Activated CD8-positive, alpha-beta T cell treated with anti-CD3 and anti-CD28 coated beads for 36 hours (primary cell): ENCODE measurements at regions of chr2 and their contacts with region 1.

Region 1: DNA sequence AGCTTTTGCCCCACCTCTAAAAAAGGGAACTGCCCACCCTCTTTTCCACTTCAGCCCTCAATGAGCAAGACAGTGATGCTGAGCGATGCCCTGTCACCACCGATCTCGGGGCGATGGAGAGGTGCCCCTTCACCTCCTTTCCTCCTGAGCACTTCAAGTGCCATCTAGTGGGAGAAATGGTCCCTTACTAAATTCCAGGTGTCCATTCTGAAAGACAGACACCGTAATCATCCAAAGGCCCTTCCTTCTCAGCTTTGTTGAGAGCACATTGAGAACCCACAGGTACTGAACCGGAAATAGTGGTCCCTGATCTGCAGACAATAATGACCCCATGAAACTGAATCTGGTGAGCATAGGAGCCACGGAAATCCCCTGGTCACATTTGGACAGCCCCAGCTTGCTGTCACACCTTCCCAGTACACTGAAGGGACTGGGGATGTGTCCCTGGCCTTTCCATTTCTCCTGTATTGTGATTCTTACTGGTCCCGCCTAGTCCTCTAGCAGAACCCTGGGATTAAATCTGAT is 38.5 kb downstream of the KCTD18 start:
- DNase-seq: peak; percentile 57
- ATAC-seq: peak; percentile 44
- H3K4me3 Mint-ChIP-seq: no peak overlapping the region
- H3K27ac Mint-ChIP-seq: no peak overlapping the region
- H3K4me1 Mint-ChIP-seq: peaks cover 36% of the 10 kb centered on the region
- H3K27me3 Mint-ChIP-seq: no peaks in the 10 kb centered on the region
- CTCF ChIP-seq: peak; percentile 64

Region 2: GRCh38 chr2:199979832-199980628 is 491.4 kb before region 1 on chr2:
- CTCF ChIA-PET with region 1: interaction called, 16 read pairs
- POLR2A ChIA-PET with region 1: no interaction called
- intact Hi-C with region 1: loop called (anchors 5 kb)
- DNase-seq: peak; percentile 93
- ATAC-seq: peak; percentile 45
- H3K4me3 Mint-ChIP-seq: no peak overlapping the region
- H3K27ac Mint-ChIP-seq: no peak overlapping the region
- H3K4me1 Mint-ChIP-seq: peaks cover 18% of the 10 kb centered on the region
- H3K27me3 Mint-ChIP-seq: no peaks in the 10 kb centered on the region
- CTCF ChIP-seq: peak; percentile 75

Region 3: GRCh38 chr2:199985625-199986207 is 485.7 kb before region 1 on chr2:
- CTCF ChIA-PET with region 1: interaction called, 16 read pairs
- POLR2A ChIA-PET with region 1: interaction called, 5 read pairs
- intact Hi-C with region 1: loop called (anchors 5 kb)
- DNase-seq: peak; percentile 82
- ATAC-seq: peak; percentile 96
- H3K4me3 Mint-ChIP-seq: no peak overlapping the region
- H3K27ac Mint-ChIP-seq: no peak overlapping the region
- H3K4me1 Mint-ChIP-seq: no peaks in the 10 kb centered on the region
- H3K27me3 Mint-ChIP-seq: no peaks in the 10 kb centered on the region
- CTCF ChIP-seq: peak; percentile 56

Region 4: DNA sequence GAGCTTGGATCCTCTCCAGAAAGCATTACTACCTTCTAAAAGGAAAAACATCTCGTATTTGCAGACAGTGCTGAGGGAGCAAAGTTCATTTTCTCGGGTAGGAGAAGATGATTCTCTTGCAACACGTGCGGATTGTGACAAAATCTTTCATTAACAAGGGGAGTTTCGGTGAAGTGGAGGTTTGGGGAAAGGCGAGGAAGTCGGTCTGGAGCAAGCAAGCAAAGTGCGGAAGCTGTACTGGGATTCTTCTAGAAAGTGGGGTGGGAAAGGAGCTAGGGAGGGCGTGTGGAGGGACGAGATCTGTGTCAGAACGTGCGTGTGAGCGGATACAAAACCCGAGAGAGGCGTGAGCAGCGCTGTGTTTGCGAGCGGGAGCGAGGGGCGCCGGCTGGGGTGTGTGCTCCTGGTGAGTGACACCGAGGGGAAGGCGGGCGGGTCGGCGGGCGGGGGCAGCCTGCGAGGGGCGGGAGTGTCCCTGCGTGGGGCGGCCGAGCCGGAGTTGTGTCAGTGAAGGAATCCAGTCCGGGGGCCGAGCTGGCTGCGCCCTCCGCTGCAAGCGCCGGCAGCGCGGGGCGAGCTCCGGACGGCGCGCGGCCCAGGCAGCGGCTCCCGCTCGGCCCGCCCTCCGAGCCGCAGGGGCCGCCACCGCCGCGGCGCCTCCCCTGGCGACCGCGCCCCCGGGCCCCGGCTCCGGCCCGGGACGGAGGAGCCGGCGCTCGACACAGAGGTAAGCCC is 165.0 kb before region 1 on chr2 and contains the start of gene SPATS2L:
- CTCF ChIA-PET with region 1: interaction called, 11 read pairs
- POLR2A ChIA-PET with region 1: interaction called, 3 read pairs
- intact Hi-C with region 1: loop called (anchors 10 kb)
- DNase-seq: peak; percentile 67
- ATAC-seq: peak; percentile 73
- H3K4me3 Mint-ChIP-seq: peak within 1 kb of the TSS; percentile 72
- H3K27ac Mint-ChIP-seq: peak within 1 kb of the TSS; percentile 16
- H3K4me1 Mint-ChIP-seq: peaks cover 8% of the 10 kb centered on the region
- H3K27me3 Mint-ChIP-seq: peaks cover 36% of the 10 kb centered on the region
- CTCF ChIP-seq: no peak
- total RNA-seq, gene SPATS2L: 5.7 to 9.0 TPM

Region 5: DNA sequence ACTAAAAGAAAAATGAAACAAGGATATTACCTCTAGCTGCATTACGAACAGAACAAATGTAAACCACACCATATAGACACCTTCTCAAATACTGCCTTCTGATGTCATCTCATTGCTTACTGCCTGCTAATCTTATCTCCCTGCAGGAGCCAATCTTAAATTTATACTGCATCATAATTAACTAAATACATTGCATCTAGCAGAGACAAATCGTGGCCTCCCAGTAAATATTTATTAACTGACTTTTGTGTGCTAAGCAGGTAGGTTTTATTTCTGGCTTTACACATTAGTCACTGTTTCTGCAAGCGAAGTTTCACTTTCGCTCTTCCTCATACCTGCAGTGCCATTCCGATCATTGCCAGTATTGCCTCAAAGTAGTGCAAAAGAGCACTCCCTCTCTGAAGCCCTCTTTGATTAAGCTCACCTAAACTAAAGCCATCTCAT is 97.4 kb before region 1 on chr2:
- CTCF ChIA-PET with region 1: interaction called, 15 read pairs
- POLR2A ChIA-PET with region 1: no interaction called
- intact Hi-C with region 1: no loop called
- DNase-seq: peak; percentile 58
- ATAC-seq: peak; percentile 87
- H3K4me3 Mint-ChIP-seq: peak overlapping the region; percentile 76
- H3K27ac Mint-ChIP-seq: peak overlapping the region; percentile 82
- H3K4me1 Mint-ChIP-seq: peaks cover 42% of the 10 kb centered on the region
- H3K27me3 Mint-ChIP-seq: no peaks in the 10 kb centered on the region
- CTCF ChIP-seq: no peak

Region 6: GRCh38 chr2:200454927-200455801 is 16.2 kb before region 1 on chr2:
- CTCF ChIA-PET with region 1: interaction called, 17 read pairs
- POLR2A ChIA-PET with region 1: interaction called, 4 read pairs
- intact Hi-C with region 1: no loop called
- DNase-seq: peak; percentile 33
- ATAC-seq: peak; percentile 85
- H3K4me3 Mint-ChIP-seq: no peak overlapping the region
- H3K27ac Mint-ChIP-seq: peak overlapping the region; percentile 17
- H3K4me1 Mint-ChIP-seq: peaks cover 12% of the 10 kb centered on the region
- H3K27me3 Mint-ChIP-seq: no peaks in the 10 kb centered on the region
- CTCF ChIP-seq: no peak

Region 7: DNA sequence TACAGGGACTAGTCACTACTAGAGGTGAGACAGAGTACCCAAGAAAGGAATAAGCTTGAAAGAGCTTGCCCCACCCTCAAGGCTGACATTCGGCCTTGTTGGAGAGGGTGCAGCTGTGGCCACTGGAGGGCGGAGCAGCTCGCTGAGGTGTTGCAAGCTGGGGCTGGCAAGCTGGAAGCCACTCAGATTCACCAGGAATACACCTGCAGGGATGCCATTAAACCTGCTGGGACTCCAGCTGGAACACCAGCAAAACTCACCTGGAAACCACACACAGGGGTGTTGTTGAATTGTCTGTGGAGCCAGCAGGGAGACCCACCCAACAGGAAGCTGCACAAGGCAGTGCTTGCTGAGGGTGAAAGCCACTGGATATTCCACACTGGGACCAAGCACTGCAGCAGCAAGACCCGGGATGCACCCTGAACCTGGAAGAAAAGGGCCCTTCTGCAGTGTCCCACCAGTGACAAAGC is 12.4 kb after region 1 on chr2:
- CTCF ChIA-PET with region 1: interaction called, 50 read pairs
- POLR2A ChIA-PET with region 1: interaction called, 4 read pairs
- intact Hi-C with region 1: no loop called
- DNase-seq: peak; percentile 58
- ATAC-seq: peak; percentile 71
- H3K4me3 Mint-ChIP-seq: no peak overlapping the region
- H3K27ac Mint-ChIP-seq: no peak overlapping the region
- H3K4me1 Mint-ChIP-seq: no peaks in the 10 kb centered on the region
- H3K27me3 Mint-ChIP-seq: no peaks in the 10 kb centered on the region
- CTCF ChIP-seq: peak; percentile 41

Region 8: DNA sequence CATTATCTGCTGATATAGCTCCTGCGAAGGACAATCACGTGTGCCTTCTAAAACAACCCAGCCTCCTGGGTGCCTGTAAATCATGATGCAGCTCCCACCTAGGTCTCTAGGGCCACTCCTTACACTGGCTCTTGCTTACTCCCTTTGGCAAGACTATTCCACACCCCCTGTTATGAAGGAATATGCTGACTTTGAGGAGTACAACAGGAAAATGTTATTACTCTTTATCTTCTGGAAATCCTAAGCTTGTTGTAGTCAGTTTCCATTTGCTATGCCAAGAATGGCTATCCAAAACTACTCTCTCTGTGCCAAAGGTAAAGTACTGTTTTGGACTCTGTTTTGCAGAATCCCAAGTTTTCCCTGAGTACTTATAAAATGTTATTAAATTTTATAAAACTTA is 62.4 kb after region 1 on chr2:
- CTCF ChIA-PET with region 1: no interaction called
- POLR2A ChIA-PET with region 1: no interaction called
- intact Hi-C with region 1: no loop called
- DNase-seq: no peak
- ATAC-seq: no peak
- H3K4me3 Mint-ChIP-seq: no peak overlapping the region
- H3K27ac Mint-ChIP-seq: no peak overlapping the region
- H3K4me1 Mint-ChIP-seq: no peaks in the 10 kb centered on the region
- H3K27me3 Mint-ChIP-seq: no peaks in the 10 kb centered on the region
- CTCF ChIP-seq: no peak

Region 9: GRCh38 chr2:200670313-200670712 is 198.9 kb after region 1 on chr2:
- CTCF ChIA-PET with region 1: no interaction called
- POLR2A ChIA-PET with region 1: no interaction called
- intact Hi-C with region 1: no loop called
- DNase-seq: no peak
- ATAC-seq: no peak
- H3K4me3 Mint-ChIP-seq: no peak overlapping the region
- H3K27ac Mint-ChIP-seq: no peak overlapping the region
- H3K4me1 Mint-ChIP-seq: peaks cover 10% of the 10 kb centered on the region
- H3K27me3 Mint-ChIP-seq: peaks cover 4% of the 10 kb centered on the region
- CTCF ChIP-seq: no peak